ENCODE measurements at regions of chr7 and their contacts with region 1.

Region 1: DNA sequence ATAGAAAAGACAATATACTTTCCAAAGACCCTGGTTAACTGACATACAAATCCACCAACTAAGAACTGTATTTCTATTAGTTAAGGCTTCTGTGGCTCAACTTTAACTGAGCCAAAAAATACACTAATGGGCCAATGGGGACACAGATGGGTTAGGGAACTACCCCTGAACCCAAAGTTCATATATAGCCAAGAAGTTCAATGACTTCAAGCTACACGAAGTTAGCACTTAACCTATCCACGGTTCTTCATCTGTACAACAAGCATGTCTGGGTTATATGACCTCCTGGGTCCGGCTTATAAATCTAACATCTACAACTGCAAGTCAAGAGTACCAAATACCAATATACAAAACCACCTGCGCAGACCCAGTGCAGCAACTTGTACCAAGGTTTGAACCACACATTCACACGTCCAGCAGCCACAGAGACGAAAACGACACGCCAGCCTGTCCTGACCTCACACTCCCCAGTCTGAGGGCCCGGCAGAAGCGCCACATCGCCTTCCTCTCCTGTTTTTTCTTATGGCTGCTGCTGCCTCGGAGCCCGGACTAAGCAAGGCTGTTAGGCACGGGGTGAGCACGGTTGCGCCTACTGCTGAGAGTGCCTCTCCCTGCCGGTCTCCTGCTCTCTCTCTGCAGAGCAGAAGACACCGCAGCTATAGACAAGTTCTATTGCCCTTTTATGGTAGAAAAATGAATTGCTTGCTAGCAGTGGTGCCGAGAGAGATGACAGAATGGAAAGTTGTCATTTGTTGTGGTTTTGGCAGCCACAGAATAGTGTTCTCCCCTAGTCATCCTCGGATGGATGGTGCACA is 86.3 kb downstream of the RNF216 start:
- DNase-seq: peak; percentile 79
- H3K4me3 Mint-ChIP-seq: peak overlapping the region; percentile 81
- H3K27ac Mint-ChIP-seq: peak overlapping the region; percentile 94
- H3K4me1 Mint-ChIP-seq: peaks cover 88% of the 10 kb centered on the region
- H3K27me3 Mint-ChIP-seq: no peaks in the 10 kb centered on the region

Region 2: DNA sequence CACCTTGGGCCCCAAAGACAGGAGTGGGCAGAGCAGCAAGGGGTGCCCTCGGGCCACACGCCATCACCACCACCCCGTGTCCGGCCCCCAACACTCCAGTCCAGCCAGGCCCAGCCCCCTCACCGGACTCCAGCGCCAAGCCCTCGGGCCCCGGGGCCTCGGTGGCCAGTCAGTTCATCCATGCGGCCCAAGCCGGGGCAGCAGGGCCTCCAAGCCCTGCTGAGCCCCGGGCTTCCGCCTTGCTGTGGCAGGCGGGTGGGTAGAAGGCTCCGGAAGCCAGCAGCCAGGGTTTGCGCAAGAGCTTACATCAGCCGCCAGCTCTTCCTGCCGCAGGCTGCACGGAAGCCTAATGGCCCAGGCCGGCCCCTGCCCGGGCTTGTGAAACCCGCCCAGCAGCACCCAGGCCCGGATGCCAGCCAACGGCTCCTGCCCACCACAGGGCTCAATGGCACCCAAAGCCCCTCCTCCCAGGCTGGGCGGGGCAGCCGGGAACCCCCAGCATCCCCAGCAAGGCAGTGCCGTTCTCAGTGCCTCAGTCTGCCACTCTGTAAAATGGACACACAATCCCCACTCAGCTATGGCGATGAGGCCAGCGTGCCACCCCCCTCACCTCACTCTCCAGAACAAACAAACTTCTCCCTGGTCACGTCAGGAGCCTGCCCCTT is 298.0 kb before region 1 on chr7:
- intact Hi-C with region 1: loop called (anchors 2 kb)
- DNase-seq: peak; percentile 84
- H3K4me3 Mint-ChIP-seq: peak overlapping the region; percentile 80
- H3K27ac Mint-ChIP-seq: peak overlapping the region; percentile 94
- H3K4me1 Mint-ChIP-seq: peaks cover 15% of the 10 kb centered on the region
- H3K27me3 Mint-ChIP-seq: no peaks in the 10 kb centered on the region

Region 3: GRCh38 chr7:5620459-5620881 is 74.6 kb before region 1 on chr7:
- intact Hi-C with region 1: no loop called
- DNase-seq: no peak
- H3K4me3 Mint-ChIP-seq: no peak overlapping the region
- H3K27ac Mint-ChIP-seq: no peak overlapping the region
- H3K4me1 Mint-ChIP-seq: no peaks in the 10 kb centered on the region
- H3K27me3 Mint-ChIP-seq: no peaks in the 10 kb centered on the region

Region 4: DNA sequence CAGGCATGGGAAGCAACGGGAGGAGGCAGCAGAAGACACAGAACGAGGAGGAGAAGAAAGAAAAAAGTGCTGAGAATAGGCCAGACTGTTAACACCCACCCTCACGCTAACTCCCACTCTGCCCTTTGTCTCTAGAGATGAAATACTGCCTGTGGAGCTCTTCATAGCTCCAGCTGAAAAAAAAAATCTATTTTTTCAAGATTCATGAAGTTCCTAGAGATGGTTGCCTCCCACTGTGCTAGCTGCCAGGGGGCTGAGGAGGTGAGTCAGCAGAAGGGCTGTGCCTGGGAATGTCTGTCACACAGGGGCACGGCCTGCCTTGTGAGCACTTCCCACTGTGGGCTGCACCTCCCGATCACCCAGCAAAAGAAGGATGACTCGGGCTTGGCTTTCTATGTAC is 58.2 kb before region 1 on chr7:
- intact Hi-C with region 1: loop called (anchors 2 kb)
- DNase-seq: no peak
- H3K4me3 Mint-ChIP-seq: no peak overlapping the region
- H3K27ac Mint-ChIP-seq: no peak overlapping the region
- H3K4me1 Mint-ChIP-seq: peaks cover 8% of the 10 kb centered on the region
- H3K27me3 Mint-ChIP-seq: no peaks in the 10 kb centered on the region

Region 5: GRCh38 chr7:5780801-5781496 is 85.8 kb after region 1 on chr7:
- intact Hi-C with region 1: loop called (anchors 2 kb)
- DNase-seq: peak; percentile 35
- H3K4me3 Mint-ChIP-seq: peak overlapping the region; percentile 83
- H3K27ac Mint-ChIP-seq: peak overlapping the region; percentile 86
- H3K4me1 Mint-ChIP-seq: peaks cover 32% of the 10 kb centered on the region
- H3K27me3 Mint-ChIP-seq: no peaks in the 10 kb centered on the region

Measured in activated T-helper 2 cell treated with anti-CD3 and anti-CD28 coated beads, Interferon-gamma antibody, Interleukin-2, Interleukin-4, amounts not matched to agents 10 μg/mL and 5 μg/mL and 100 μg/mL, durations not matched to agents 14 hours and 24 hours and 36 hours (primary cell).